CD4-positive, alpha-beta T cell (primary cell): ENCODE measurements at regions of chr4 and their contacts with region 1.

Region 1: DNA sequence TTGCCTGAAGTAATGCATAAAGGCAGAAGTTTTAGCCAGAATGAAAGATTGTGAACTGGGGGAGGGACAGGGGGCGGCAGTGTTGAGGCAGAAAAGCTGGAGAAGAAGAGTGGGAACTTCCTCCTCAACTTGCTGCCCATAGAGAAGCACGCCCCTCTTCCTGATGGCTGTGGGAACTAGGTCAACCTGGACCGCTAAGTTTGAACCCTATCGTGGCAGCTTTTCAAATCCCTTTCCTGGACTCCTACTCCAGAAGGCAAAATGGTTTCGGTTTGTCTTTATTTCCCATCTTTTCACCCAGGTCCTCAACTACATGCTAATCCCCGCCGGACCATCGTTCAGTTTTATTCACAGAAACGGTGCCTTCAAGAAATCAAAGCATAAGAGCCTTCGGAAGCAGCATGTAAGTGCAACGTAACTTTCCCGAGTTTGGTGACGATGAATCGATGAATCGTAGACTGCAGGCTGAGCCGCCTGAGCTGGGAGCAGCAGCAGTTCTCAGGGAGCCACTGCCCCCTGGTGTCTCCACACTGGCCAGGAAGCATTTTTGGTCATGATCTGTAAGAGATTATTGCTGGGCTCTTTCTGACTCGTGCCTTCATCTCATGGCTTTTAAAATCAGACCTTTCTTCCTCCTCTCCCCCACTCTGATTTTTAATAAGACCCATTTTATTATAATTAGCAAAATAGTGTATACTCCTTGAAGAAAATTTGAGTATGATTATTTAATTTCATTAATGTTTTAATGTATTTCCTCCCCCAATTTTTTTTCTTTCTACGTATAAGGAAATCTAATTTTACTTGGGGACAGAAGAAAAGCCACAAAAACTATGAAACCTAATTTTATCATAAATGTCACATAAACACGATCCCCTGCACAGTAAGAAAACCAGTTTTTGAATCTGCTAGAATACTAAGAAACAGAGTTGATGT is 21.4 kb downstream of the SPINK2 start:
- DNase-seq: peak; percentile 73 to 92 (median 79)
- ATAC-seq: peak; percentile 98
- H3K4me3 ChIP-seq: peak overlapping the region; percentile 89
- H3K4me3 Mint-ChIP-seq: peak overlapping the region; percentile 95
- H3K27ac ChIP-seq: peak overlapping the region; percentile 26 to 30
- H3K27ac Mint-ChIP-seq: peak overlapping the region; percentile 90
- H3K4me1 ChIP-seq: peaks cover 12% of the 10 kb centered on the region
- H3K4me1 Mint-ChIP-seq: peaks cover 31% of the 10 kb centered on the region
- H3K27me3 ChIP-seq: no peaks in the 10 kb centered on the region
- H3K27me3 Mint-ChIP-seq: no peaks in the 10 kb centered on the region
- CTCF ChIP-seq: peak; percentile 87

Region 2: DNA sequence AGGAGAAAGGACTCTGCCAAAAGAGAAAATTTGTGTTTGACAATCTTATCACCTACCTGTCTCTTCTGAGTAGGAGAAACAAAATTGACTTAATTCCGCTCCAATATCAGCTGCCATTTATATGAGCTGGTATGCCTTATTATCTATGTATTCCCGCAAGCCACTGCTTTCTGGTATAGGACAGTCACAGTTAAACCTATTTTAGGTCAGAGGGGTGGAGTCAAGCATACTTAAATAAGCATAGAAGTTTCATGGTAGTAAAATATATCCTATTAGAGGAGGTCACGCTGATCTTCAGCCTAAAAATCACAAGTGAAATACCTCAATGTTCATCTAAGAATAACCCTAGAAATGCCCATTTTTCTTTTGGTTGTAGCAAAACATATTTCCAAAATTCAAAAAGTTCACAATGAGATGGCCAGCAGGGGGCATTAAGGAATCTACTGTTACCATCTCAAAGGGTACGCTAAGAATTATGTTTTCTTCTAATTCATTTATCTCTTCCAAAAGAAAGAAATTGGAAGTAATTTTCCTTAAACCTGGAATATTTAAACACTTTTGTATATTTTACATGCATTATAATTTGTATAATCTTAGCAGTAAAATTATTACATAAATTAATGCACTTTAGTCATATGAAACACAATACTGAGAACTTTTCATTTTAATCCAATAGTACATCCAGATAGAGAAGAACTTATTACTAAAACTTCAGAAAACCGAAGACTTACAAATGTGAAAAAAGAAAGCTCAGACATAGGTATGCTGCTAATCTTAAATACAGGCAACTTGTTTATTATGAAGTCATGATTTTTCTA is 375.2 kb before region 1 on chr4:
- CTCF ChIA-PET with region 1: interaction called, 7 read pairs
- POLR2A ChIA-PET with region 1: interaction called, 5 read pairs
- intact Hi-C with region 1: loop called in 1 of 2 experiments (anchors 1 kb)
- DNase-seq: peak in 10 of 14 experiments; percentile 18 to 76 (median 31)
- ATAC-seq: peak; percentile 48
- H3K4me3 ChIP-seq: no peak overlapping the region
- H3K4me3 Mint-ChIP-seq: no peak overlapping the region
- H3K27ac ChIP-seq: no peak overlapping the region
- H3K27ac Mint-ChIP-seq: no peak overlapping the region
- H3K4me1 ChIP-seq: no peaks in the 10 kb centered on the region
- H3K4me1 Mint-ChIP-seq: peaks cover 9% of the 10 kb centered on the region
- H3K27me3 ChIP-seq: no peaks in the 10 kb centered on the region
- H3K27me3 Mint-ChIP-seq: no peaks in the 10 kb centered on the region
- CTCF ChIP-seq: peak; percentile 86

Region 3: GRCh38 chr4:56575820-56576429 is 224.2 kb before region 1 on chr4:
- CTCF ChIA-PET with region 1: interaction called, 15 read pairs
- POLR2A ChIA-PET with region 1: interaction called, 13 read pairs
- intact Hi-C with region 1: loop called (anchors 1 kb)
- DNase-seq: peak in 3 of 14 experiments; percentile 33 to 39 (median 38)
- ATAC-seq: peak; percentile 48
- H3K4me3 ChIP-seq: no peak overlapping the region
- H3K4me3 Mint-ChIP-seq: no peak overlapping the region
- H3K27ac ChIP-seq: no peak overlapping the region
- H3K27ac Mint-ChIP-seq: no peak overlapping the region
- H3K4me1 ChIP-seq: no peaks in the 10 kb centered on the region
- H3K4me1 Mint-ChIP-seq: no peaks in the 10 kb centered on the region
- H3K27me3 ChIP-seq: peaks cover 0 to 4% of the 10 kb centered on the region in 2 experiments
- H3K27me3 Mint-ChIP-seq: no peaks in the 10 kb centered on the region
- CTCF ChIP-seq: peak; percentile 62

Region 4: DNA sequence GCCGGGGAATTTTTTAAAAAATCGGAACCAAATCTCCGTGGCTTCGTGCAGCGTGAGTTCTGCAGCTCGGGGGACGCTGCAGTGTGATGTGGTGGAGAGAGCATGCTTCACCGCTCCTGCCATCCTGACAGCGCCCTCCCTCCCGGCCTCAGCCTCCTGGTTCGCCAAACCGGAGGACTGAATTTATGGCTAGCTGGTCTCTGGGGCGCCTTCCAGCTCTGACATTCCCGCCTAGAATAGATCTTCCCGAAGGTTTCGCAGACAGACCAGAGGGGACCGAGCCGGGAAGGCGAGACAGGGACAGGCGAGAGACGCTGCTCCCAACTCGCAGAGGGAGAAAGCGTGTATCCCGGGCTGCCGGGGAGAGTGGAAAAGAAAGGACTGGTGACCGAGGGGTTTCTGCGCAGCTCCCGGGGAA is 144.9 kb before region 1 on chr4:
- CTCF ChIA-PET with region 1: interaction called, 3 read pairs
- POLR2A ChIA-PET with region 1: no interaction called
- intact Hi-C with region 1: loop called in 1 of 2 experiments (anchors 5 kb)
- DNase-seq: peak in 6 of 14 experiments; percentile 13 to 40 (median 33)
- ATAC-seq: no peak
- H3K4me3 ChIP-seq: peak overlapping the region; percentile 62
- H3K4me3 Mint-ChIP-seq: peak overlapping the region; percentile 72
- H3K27ac ChIP-seq: no peak overlapping the region
- H3K27ac Mint-ChIP-seq: peak overlapping the region; percentile 5
- H3K4me1 ChIP-seq: peaks cover 45% of the 10 kb centered on the region
- H3K4me1 Mint-ChIP-seq: peaks cover 63% of the 10 kb centered on the region
- H3K27me3 ChIP-seq: peaks cover 7 to 27% of the 10 kb centered on the region in 2 experiments
- H3K27me3 Mint-ChIP-seq: peaks cover 33% of the 10 kb centered on the region
- CTCF ChIP-seq: no peak

Region 5: GRCh38 chr4:56668298-56668697 is 131.8 kb before region 1 on chr4:
- CTCF ChIA-PET with region 1: interaction called, 5 read pairs
- POLR2A ChIA-PET with region 1: interaction called, 4 read pairs
- intact Hi-C with region 1: loop called in 1 of 2 experiments (anchors 1 kb)
- DNase-seq: peak in 3 of 14 experiments; percentile 13 to 30 (median 23)
- ATAC-seq: no peak
- H3K4me3 ChIP-seq: no peak overlapping the region
- H3K4me3 Mint-ChIP-seq: no peak overlapping the region
- H3K27ac ChIP-seq: no peak overlapping the region
- H3K27ac Mint-ChIP-seq: no peak overlapping the region
- H3K4me1 ChIP-seq: no peaks in the 10 kb centered on the region
- H3K4me1 Mint-ChIP-seq: no peaks in the 10 kb centered on the region
- H3K27me3 ChIP-seq: peaks cover 0 to 5% of the 10 kb centered on the region in 2 experiments
- H3K27me3 Mint-ChIP-seq: peaks cover 11% of the 10 kb centered on the region
- CTCF ChIP-seq: no peak

Region 6: DNA sequence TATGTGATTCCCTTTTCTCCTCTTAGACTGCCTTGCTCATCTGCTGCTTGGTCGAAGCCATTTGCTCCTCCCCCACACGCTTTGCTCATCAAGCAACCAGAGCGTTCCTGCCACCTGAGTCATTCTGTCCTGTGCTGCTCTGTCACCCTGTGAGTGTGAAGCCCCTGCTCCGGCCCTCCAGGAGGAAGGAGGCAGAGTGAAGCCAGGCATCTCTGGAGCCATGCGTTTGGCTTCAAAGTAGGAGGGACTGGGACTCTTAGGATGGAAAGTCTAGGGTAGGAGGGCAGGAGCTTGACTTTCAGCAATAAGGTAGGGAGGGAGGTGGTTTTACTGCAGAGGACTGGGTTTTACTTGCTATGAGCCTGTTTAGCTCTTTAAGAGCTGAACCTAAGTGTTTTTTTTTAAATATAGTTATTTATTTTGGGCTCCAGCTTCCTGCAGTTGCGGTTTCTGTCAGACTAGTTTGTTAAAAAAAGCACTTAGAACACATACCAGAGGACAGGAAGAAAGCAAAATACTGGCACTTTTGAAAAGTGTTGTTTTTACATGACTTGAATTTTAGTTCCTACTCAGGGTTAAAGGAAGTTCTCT is 42.2 kb before region 1 on chr4:
- CTCF ChIA-PET with region 1: interaction called, 9 read pairs
- POLR2A ChIA-PET with region 1: interaction called, 22 read pairs
- intact Hi-C with region 1: loop called (anchors 2 kb)
- DNase-seq: peak; percentile 35 to 85 (median 58)
- ATAC-seq: peak; percentile 81
- H3K4me3 ChIP-seq: peak overlapping the region; percentile 36
- H3K4me3 Mint-ChIP-seq: peak overlapping the region; percentile 83
- H3K27ac ChIP-seq: peak overlapping the region; percentile 71 to 75
- H3K27ac Mint-ChIP-seq: peak overlapping the region; percentile 89
- H3K4me1 ChIP-seq: peaks cover 44% of the 10 kb centered on the region
- H3K4me1 Mint-ChIP-seq: peaks cover 62% of the 10 kb centered on the region
- H3K27me3 ChIP-seq: no peaks in the 10 kb centered on the region
- H3K27me3 Mint-ChIP-seq: no peaks in the 10 kb centered on the region
- CTCF ChIP-seq: no peak

Region 7: DNA sequence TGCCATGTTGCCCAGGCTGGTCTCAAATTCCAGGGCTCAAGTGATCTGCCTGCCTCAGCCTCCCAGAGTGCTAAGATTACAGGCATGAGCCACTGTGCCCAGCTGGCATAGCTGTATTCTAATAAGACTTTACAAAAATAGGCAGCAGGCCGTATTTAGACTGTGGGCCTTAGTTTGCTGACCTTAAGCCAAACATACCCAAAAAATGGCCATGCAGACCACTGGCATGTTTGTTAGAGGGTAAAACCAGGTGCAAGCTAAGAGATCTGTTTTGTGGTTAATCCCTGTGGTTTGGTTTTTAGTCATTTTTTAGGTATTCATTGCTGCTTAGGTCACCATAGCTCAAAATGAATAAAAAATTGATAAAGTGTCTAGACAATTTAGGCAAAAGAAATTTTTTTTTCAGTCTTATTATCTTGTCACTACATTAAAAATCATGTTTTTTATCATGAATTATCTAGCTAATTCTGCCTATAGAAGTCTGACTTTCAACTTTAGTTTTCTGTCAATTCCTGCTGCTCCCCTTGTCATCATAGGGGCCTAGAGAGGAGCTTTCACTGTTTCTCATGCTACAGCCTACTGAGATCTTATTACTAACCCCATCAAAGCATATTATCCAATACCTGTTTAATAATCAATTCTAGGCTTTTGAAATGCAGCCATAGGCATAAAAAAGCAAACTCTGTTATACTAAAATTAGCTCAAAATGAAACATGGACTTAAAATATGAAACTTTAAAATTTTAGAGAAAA is 28.9 kb after region 1 on chr4:
- CTCF ChIA-PET with region 1: no interaction called
- POLR2A ChIA-PET with region 1: no interaction called
- intact Hi-C with region 1: loop called in 1 of 2 experiments (anchors 2 kb)
- DNase-seq: no peak
- ATAC-seq: no peak
- H3K4me3 ChIP-seq: no peak overlapping the region
- H3K4me3 Mint-ChIP-seq: no peak overlapping the region
- H3K27ac ChIP-seq: no peak overlapping the region
- H3K27ac Mint-ChIP-seq: no peak overlapping the region
- H3K4me1 ChIP-seq: no peaks in the 10 kb centered on the region
- H3K4me1 Mint-ChIP-seq: no peaks in the 10 kb centered on the region
- H3K27me3 ChIP-seq: no peaks in the 10 kb centered on the region
- H3K27me3 Mint-ChIP-seq: no peaks in the 10 kb centered on the region
- CTCF ChIP-seq: no peak

Region 8: GRCh38 chr4:56871371-56871866 is 71.3 kb after region 1 on chr4:
- CTCF ChIA-PET with region 1: no interaction called
- POLR2A ChIA-PET with region 1: no interaction called
- intact Hi-C with region 1: no loop called
- DNase-seq: peak in 1 of 14 experiments; percentile 13
- ATAC-seq: no peak
- H3K4me3 ChIP-seq: no peak overlapping the region
- H3K4me3 Mint-ChIP-seq: no peak overlapping the region
- H3K27ac ChIP-seq: no peak overlapping the region
- H3K27ac Mint-ChIP-seq: no peak overlapping the region
- H3K4me1 ChIP-seq: peaks cover 2% of the 10 kb centered on the region
- H3K4me1 Mint-ChIP-seq: peaks cover 9% of the 10 kb centered on the region
- H3K27me3 ChIP-seq: no peaks in the 10 kb centered on the region
- H3K27me3 Mint-ChIP-seq: peaks cover 4% of the 10 kb centered on the region
- CTCF ChIP-seq: no peak